MCF 10A (cell line): ENCODE measurements at regions of chr12 and their contacts with region 1.

Region 1: GRCh38 chr12:46124848-46125619 is 134.7 kb upstream of the SCAF11 start:
- DNase-seq: peak; percentile 87
- H3K4me3 Mint-ChIP-seq: peak overlapping the region; percentile 64
- H3K27ac Mint-ChIP-seq: peak overlapping the region; percentile 28
- H3K4me1 Mint-ChIP-seq: peaks cover 13% of the 10 kb centered on the region
- H3K27me3 Mint-ChIP-seq: peaks cover 16% of the 10 kb centered on the region
- CTCF ChIP-seq: peak; percentile 69

Region 2: DNA sequence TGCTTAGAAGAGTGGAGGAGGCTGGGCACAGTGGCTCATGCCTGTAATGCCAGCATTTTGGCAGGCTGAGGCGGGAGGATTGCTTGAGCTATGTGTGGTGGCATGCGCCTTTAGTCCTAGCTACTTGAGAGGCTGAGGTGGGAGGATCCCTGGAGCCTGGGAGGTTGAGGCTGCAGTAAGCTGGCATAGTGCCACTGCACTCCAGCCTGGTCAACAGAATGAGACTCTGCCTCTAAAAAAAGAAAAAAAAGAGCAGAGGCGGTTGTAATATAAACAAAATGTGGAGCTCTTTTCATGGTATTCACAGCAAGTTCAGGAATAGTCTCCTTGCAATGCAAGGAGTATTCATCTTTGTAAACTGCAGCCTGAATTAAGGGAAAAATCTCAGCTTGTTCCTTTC is 368.4 kb before region 1 on chr12:
- CTCF ChIA-PET with region 1: no interaction called
- POLR2A ChIA-PET with region 1: no interaction called
- intact Hi-C with region 1: no loop called
- DNase-seq: no peak
- H3K4me3 Mint-ChIP-seq: no peak overlapping the region
- H3K27ac Mint-ChIP-seq: no peak overlapping the region
- H3K4me1 Mint-ChIP-seq: peaks cover 13% of the 10 kb centered on the region
- H3K27me3 Mint-ChIP-seq: no peaks in the 10 kb centered on the region
- CTCF ChIP-seq: no peak

Region 3: GRCh38 chr12:45959728-45960127 is 165.3 kb before region 1 on chr12:
- CTCF ChIA-PET with region 1: no interaction called
- POLR2A ChIA-PET with region 1: no interaction called
- intact Hi-C with region 1: no loop called
- DNase-seq: no peak
- H3K4me3 Mint-ChIP-seq: no peak overlapping the region
- H3K27ac Mint-ChIP-seq: no peak overlapping the region
- H3K4me1 Mint-ChIP-seq: peaks cover 9% of the 10 kb centered on the region
- H3K27me3 Mint-ChIP-seq: no peaks in the 10 kb centered on the region
- CTCF ChIP-seq: no peak

Region 4: DNA sequence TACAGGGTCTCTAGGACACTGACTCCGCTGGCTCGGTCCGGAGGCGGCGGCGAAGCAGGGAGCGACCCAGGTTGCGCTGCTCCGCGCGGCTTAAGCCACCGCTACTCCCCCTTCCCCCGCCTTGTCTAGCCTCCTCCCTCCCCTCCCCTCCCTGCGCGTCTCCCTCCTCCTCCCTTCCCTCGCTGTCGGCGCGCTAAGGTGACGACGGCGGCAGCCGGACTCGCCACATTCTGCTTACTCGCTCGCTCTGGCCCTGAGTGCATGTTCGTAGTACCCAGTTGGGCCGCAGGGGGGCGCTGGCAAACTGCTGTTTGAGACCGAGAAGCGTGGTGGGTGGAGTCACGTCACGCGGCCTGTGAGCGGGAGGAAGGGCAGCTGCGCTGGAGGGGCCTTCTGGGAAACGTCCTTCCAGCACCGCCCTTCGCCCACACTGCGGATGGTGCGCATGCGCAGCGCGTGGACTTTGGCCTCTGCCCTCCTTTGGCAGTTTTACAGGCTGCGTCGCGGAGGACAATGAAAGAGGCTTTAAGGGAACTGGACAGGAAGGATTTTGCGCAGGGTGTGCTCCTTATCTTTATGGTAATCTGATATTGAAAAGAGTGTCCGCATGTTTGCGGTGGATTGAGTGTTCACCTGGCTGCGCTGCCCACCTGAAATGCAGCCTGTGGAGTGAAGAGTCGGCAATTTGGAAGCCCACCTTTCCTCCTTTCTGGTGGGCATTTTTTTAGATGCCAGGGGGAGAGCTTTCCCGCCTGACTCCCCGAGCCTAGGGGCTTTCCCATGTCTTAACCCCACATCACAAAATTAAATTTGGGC is 134.4 kb before region 1 on chr12 and contains the start of gene SCAF11:
- CTCF ChIA-PET with region 1: interaction called, 5 read pairs
- POLR2A ChIA-PET with region 1: interaction called, 29 read pairs
- intact Hi-C with region 1: no loop called
- DNase-seq: peak; percentile 99
- H3K4me3 Mint-ChIP-seq: peak within 1 kb of the TSS; percentile 91
- H3K27ac Mint-ChIP-seq: peak within 1 kb of the TSS; percentile 93
- H3K4me1 Mint-ChIP-seq: peaks cover 31% of the 10 kb centered on the region
- H3K27me3 Mint-ChIP-seq: no peaks in the 10 kb centered on the region
- CTCF ChIP-seq: peak; percentile 85
- total RNA-seq, gene SCAF11: 106 and 107 TPM in 2 replicates

Region 5: DNA sequence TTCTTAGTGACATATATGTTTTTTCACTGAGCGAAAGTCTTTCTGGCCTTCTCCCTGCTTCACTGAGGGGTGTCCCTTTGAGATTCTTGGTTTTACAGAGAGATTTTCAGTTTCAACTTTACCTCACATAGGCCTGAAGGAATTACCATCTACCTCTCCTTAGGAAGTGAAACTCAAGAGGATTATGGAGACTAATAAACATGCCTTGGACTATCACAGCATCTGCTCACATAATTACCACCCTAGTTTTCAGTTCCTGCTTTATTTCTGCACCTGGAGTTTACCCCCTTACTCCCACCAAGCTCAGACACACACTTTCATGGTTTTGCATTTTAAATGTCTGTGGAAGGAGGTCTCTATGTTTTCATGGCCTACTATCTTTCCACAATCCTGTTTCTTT is 16.3 kb before region 1 on chr12:
- CTCF ChIA-PET with region 1: interaction called, 34 read pairs
- POLR2A ChIA-PET with region 1: interaction called, 8 read pairs
- intact Hi-C with region 1: no loop called
- DNase-seq: no peak
- H3K4me3 Mint-ChIP-seq: no peak overlapping the region
- H3K27ac Mint-ChIP-seq: peak overlapping the region; percentile 89
- H3K4me1 Mint-ChIP-seq: peaks cover 15% of the 10 kb centered on the region
- H3K27me3 Mint-ChIP-seq: no peaks in the 10 kb centered on the region
- CTCF ChIP-seq: no peak

Region 6: DNA sequence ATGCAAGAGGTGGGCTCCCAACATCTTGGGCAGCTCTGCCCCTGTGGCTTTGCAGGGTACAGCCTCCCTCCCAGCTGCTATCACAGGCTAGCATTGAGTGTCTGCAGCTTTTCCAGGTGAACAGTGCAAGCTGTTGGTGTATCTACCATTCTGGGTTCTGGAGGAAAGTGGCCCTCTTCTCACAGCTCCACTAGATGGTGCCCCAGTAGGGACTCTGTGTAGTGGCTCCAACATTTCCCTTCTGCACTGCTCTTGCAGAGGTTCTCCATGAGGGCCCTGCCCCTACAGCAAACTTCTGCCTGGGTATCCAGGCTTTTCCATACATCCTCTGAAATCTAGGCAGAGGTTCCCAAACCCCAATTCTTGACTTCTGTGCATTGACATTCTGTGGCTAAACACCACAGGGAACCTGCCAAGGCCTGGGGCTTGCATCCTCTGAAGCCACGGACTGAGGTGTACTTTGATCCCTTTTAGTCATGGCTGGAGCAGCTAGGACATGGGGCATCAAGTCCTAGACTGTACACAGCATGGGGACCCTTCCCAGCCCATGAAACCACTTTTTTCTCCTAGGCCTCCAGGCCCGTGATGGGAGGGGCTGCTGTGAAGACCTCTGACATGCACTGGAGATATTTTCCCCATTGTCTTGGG is 167.8 kb after region 1 on chr12:
- CTCF ChIA-PET with region 1: no interaction called
- POLR2A ChIA-PET with region 1: no interaction called
- intact Hi-C with region 1: no loop called
- DNase-seq: peak; percentile 6
- H3K4me3 Mint-ChIP-seq: no peak overlapping the region
- H3K27ac Mint-ChIP-seq: no peak overlapping the region
- H3K4me1 Mint-ChIP-seq: no peaks in the 10 kb centered on the region
- H3K27me3 Mint-ChIP-seq: no peaks in the 10 kb centered on the region
- CTCF ChIP-seq: no peak

Region 7: GRCh38 chr12:46364777-46365580 is 239.9 kb after region 1 on chr12:
- CTCF ChIA-PET with region 1: interaction called, 5 read pairs
- POLR2A ChIA-PET with region 1: interaction called, 10 read pairs
- intact Hi-C with region 1: no loop called
- DNase-seq: peak; percentile 85
- H3K4me3 Mint-ChIP-seq: peak overlapping the region; percentile 93
- H3K27ac Mint-ChIP-seq: no peak overlapping the region
- H3K4me1 Mint-ChIP-seq: peaks cover 24% of the 10 kb centered on the region
- H3K27me3 Mint-ChIP-seq: no peaks in the 10 kb centered on the region
- CTCF ChIP-seq: no peak

Region 8: GRCh38 chr12:46702581-46703344 is 577.7 kb after region 1 on chr12:
- CTCF ChIA-PET with region 1: no interaction called
- POLR2A ChIA-PET with region 1: no interaction called
- intact Hi-C with region 1: no loop called
- DNase-seq: peak; percentile 94
- H3K4me3 Mint-ChIP-seq: peak overlapping the region; percentile 64
- H3K27ac Mint-ChIP-seq: peak overlapping the region; percentile 93
- H3K4me1 Mint-ChIP-seq: peaks cover 30% of the 10 kb centered on the region
- H3K27me3 Mint-ChIP-seq: no peaks in the 10 kb centered on the region
- CTCF ChIP-seq: no peak

Region 9: DNA sequence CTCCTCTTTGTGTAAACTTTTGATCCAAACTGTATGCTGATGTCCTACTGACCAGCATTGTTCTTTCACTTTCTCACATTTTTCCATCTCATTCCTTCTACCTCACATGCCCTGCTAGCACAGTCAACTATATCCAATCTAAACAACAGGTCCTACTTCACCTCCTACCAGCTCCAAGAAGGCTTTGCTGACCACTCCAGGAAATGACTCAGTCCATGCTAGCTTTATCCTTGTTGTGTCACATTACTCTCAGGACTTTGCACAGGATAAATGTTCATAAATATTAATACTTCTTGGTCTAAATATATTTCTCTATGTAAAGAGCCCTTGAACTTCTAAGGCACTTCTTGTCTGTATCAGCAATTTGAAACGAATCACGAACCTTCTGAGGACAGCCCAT is 889.4 kb after region 1 on chr12:
- CTCF ChIA-PET with region 1: interaction called, 26 read pairs
- POLR2A ChIA-PET with region 1: no interaction called
- intact Hi-C with region 1: loop called (anchors 10 kb)
- DNase-seq: peak; percentile 63
- H3K4me3 Mint-ChIP-seq: no peak overlapping the region
- H3K27ac Mint-ChIP-seq: peak overlapping the region; percentile 4
- H3K4me1 Mint-ChIP-seq: peaks cover 21% of the 10 kb centered on the region
- H3K27me3 Mint-ChIP-seq: no peaks in the 10 kb centered on the region
- CTCF ChIP-seq: no peak